ENCODE measurements at regions of chr3 and their contacts with region 1.

Region 1: GRCh38 chr3:124026516-124026915 is 34.6 kb upstream of the ROPN1 start:
- DNase-seq: no peak
- ATAC-seq: no peak
- H3K4me3 ChIP-seq: no peak overlapping the region
- H3K27ac ChIP-seq: no peak overlapping the region
- H3K4me1 ChIP-seq: no peaks in the 10 kb centered on the region
- H3K27me3 ChIP-seq: peaks cover 52% of the 10 kb centered on the region
- CTCF ChIP-seq: no peak

Region 2: GRCh38 chr3:123960781-123961507 is 65.6 kb before region 1 on chr3 and contains the start of gene CCDC14:
- CTCF ChIA-PET with region 1: no interaction called
- POLR2A ChIA-PET with region 1: interaction called, 13 read pairs
- in situ Hi-C with region 1: no loop called
- intact Hi-C with region 1: no loop called
- DNase-seq: peak; percentile 47
- ATAC-seq: peak; percentile 99
- H3K4me3 ChIP-seq: peak within 1 kb of the TSS; percentile 94 to 96
- H3K27ac ChIP-seq: peak within 1 kb of the TSS; percentile 97
- H3K4me1 ChIP-seq: no peaks in the 10 kb centered on the region; the same call in 1 of the 2 replicates
- H3K27me3 ChIP-seq: peaks cover 3% of the 10 kb centered on the region; the same call in 1 of the 2 replicates
- CTCF ChIP-seq: no peak
- total RNA-seq, gene CCDC14: 57.7 TPM

Region 3: DNA sequence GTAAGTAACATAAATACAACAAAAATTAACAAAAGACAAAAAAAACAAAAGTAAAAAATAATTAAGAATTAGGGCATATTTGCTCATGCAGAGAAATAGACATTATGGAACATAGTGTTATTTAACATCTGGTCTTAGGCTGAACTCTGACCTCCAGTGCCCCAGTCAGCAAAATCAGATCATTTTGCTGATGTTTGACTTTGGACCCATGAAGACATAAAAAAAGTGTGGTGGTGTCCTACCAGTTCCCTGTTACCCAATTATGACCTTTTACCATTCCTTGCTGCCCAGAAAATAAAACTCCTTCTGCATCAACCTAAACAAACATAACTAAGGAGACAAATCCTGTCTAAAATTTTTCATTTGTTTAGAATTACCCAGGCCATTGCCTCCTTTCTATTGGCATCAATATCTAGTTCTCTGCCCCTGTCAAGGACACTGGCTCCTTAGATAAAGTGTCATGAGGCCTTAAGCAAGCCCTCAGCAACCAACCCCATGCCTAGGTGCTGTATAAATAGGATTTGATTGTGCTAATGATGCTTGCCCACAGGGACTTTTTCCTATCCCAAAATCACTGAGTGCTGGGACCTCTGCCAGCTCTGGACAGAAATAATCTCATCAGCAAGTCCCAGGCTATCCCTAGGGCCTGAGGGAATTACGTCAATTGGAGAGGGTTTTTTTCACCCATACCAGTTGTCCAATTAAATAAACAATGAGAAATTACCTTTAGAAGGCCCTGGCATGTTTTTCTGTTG is 369.2 kb after region 1 on chr3:
- CTCF ChIA-PET with region 1: no interaction called
- POLR2A ChIA-PET with region 1: no interaction called
- in situ Hi-C with region 1: no loop called
- intact Hi-C with region 1: no loop called
- DNase-seq: no peak
- ATAC-seq: no peak
- H3K4me3 ChIP-seq: no peak overlapping the region
- H3K27ac ChIP-seq: no peak overlapping the region
- H3K4me1 ChIP-seq: no peaks in the 10 kb centered on the region
- H3K27me3 ChIP-seq: peaks cover 36% of the 10 kb centered on the region
- CTCF ChIP-seq: no peak

Measured in Panc1 (cell line).